Right lobe of liver (tissue), 6 donors: ENCODE measurements at regions of chr20 and their contacts with region 1.

Region 1: DNA sequence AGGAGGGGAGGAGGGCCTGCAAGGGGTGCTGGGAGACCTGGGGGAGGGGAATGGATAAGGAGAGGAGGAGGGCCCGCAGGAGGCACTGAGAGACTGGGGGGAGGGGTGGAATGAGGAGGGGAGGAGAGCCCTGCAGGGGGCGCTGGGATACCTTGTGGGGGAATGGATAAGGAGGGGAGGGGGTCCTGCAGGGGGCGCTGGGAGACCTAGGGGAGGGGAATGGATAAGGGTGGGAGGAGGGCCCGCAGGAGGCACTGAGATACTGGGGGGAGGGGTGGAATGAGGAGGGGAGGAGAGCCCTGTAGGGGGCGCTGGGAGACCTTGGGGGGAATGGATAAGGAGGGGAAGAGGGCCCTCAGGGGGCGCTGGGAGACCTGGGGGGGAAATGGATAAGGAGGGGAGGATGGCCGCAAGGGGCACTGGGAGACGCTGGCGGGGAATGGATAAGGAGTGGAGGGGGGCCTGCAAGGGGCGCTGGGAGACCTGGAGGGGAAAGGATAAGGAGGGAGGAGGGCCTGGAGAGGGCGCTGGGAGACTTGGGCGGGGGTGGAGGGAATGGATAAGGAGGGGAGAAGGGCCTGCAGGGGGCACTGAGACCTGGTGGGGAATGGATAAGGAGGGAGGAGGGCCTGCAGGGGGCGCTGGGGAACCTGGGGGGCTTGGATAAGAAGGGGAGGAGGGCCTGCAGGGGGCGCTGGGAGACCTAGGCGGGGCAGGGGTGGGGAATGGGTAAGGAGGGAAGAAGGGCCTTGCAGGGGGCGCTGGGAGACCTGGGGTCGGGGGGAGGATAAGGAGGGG is 1.3 kb upstream of the CTCFL start:
- DNase-seq: peak; percentile 45 to 66 (median 63)
- ATAC-seq: peak; percentile 2 to 48 (median 11)
- H3K4me3 ChIP-seq: no peak overlapping the region
- H3K27ac ChIP-seq: peak overlapping the region in 2 of 3 donors; percentile 98 to 99
- H3K4me1 ChIP-seq: peaks cover 0 to 30% (median 5%) of the 10 kb centered on the region in 4 donors
- H3K27me3 ChIP-seq: no peaks in the 10 kb centered on the region
- CTCF ChIP-seq: no peak
- POLR2A ChIP-seq: no peak

Region 2: GRCh38 chr20:57586370-57586793 is 60.1 kb after region 1 on chr20:
- intact Hi-C with region 1: loop called in 1 of 2 experiments (anchors 5 kb)
- DNase-seq: peak; percentile 90 to 94 (median 93)
- ATAC-seq: peak; percentile 66 to 76 (median 74)
- H3K4me3 ChIP-seq: no peak overlapping the region
- H3K27ac ChIP-seq: peak overlapping the region; percentile 65 to 98 (median 96)
- H3K4me1 ChIP-seq: peaks cover 0 to 74% (median 31%) of the 10 kb centered on the region in 4 donors
- H3K27me3 ChIP-seq: no peaks in the 10 kb centered on the region
- CTCF ChIP-seq: no peak
- POLR2A ChIP-seq: peak; percentile 56

Region 3: DNA sequence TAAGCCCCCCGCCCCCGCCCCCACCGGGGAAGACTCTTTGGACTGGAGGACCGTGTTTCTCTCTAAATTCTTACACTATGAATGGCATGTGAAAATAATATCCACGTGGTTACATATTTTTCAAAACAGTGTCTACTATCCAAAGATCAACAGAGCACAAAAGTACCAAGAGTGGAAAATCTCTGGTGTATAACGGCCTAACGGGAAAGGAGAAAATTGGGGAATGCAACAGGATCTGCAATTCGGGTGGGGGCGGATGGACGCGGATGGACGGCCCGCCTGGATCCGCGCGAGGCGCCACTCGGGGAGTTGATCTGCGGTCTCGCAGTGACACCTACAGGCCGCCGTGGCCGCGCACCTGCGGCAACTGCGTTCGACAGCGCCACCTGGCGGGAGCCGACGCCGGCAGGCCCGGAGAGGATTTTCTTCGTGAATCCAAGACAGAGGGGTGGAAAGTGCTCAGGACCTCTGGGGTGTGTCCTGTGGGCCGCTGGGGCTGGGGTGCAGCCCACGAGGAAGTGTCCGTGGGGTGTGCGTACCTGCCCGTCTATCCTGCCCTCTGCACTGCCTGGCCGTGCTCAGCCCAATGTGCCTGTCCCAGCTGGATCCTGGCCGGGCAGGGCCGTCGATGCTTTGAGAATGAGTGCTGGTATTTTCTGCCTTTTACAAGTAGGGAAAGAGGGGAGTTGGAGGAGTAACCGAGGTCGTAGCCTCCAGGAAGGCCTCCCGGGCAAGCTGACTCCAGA is 683.5 kb after region 1 on chr20:
- intact Hi-C with region 1: loop called in 1 of 2 experiments (anchors 10 kb)
- DNase-seq: peak; percentile 81 to 89 (median 86)
- ATAC-seq: peak; percentile 94 to 99 (median 98)
- H3K4me3 ChIP-seq: no peak overlapping the region
- H3K27ac ChIP-seq: no peak overlapping the region
- H3K4me1 ChIP-seq: no peaks in the 10 kb centered on the region
- H3K27me3 ChIP-seq: no peaks in the 10 kb centered on the region
- CTCF ChIP-seq: peak; percentile 100
- POLR2A ChIP-seq: no peak